ENCODE measurements at regions of chr2 and their contacts with region 1.

Region 1: DNA sequence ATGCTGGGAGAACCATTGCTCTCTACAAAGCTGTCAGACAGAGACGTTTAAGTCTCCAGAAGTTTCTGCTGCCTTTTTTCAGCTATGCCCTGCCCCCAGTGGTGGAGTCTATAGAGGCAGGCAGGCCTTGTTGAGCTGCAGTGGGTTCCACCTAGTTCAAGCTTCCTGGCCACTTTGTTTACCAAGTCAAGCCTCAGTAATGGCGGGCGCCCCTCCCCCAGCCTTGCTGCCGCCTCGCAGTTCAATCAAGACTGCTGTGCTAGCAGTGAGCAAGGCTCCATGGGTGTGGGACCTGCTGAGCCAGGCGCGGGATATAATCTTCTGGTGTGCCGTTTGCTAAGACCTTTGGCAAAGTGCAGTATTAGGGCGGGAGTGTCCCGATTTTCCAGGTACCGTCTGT is 52.7 kb upstream of the SCYGR2 start:
- DNase-seq: peak; percentile 44
- ATAC-seq: no peak
- H3K4me3 ChIP-seq: no peak overlapping the region
- H3K27ac ChIP-seq: no peak overlapping the region
- H3K4me1 ChIP-seq: no peaks in the 10 kb centered on the region
- H3K27me3 ChIP-seq: no peaks in the 10 kb centered on the region
- CTCF ChIP-seq: peak; percentile 48

Region 2: DNA sequence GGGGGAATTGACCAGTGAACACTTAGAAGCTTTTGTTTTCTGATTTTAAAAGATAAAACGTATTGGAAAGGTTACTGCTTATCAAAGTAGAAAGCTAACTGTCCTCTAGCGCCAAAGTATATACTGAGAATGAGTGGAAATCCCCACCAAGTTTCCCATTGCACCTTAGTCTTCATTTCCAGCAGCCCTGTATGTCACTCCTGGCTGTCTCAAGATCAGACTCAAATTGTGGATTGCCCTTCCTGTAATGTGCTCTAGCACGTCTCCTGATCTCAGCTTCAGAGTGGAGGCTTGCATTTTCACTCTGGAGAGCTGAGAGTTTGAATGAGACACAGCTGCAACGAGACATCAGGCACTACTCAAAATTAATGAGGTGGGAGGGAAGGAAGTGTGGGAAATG is 194.4 kb before region 1 on chr2:
- CTCF ChIA-PET with region 1: interaction called, 10 read pairs
- POLR2A ChIA-PET with region 1: no interaction called
- intact Hi-C with region 1: no loop called
- DNase-seq: no peak
- ATAC-seq: no peak
- H3K4me3 ChIP-seq: no peak overlapping the region
- H3K27ac ChIP-seq: no peak overlapping the region
- H3K4me1 ChIP-seq: peaks cover 15% of the 10 kb centered on the region
- H3K27me3 ChIP-seq: no peaks in the 10 kb centered on the region
- CTCF ChIP-seq: no peak